Caco-2 (cell line): ENCODE measurements at regions of chr18 and their contacts with region 1.

Region 1: GRCh38 chr18:864872-865273 is 39.8 kb upstream of the ADCYAP1 start:
- DNase-seq: peak; percentile 73 to 74
- H3K4me3 ChIP-seq: no peak overlapping the region
- H3K4me3 Mint-ChIP-seq: no peak overlapping the region
- H3K27ac Mint-ChIP-seq: no peak overlapping the region
- H3K4me1 ChIP-seq: no peaks in the 10 kb centered on the region
- H3K4me1 Mint-ChIP-seq: no peaks in the 10 kb centered on the region
- H3K27me3 ChIP-seq: no peaks in the 10 kb centered on the region
- H3K27me3 Mint-ChIP-seq: peaks cover 12% of the 10 kb centered on the region
- CTCF ChIP-seq: peak; percentile 93 to 99

Region 2: DNA sequence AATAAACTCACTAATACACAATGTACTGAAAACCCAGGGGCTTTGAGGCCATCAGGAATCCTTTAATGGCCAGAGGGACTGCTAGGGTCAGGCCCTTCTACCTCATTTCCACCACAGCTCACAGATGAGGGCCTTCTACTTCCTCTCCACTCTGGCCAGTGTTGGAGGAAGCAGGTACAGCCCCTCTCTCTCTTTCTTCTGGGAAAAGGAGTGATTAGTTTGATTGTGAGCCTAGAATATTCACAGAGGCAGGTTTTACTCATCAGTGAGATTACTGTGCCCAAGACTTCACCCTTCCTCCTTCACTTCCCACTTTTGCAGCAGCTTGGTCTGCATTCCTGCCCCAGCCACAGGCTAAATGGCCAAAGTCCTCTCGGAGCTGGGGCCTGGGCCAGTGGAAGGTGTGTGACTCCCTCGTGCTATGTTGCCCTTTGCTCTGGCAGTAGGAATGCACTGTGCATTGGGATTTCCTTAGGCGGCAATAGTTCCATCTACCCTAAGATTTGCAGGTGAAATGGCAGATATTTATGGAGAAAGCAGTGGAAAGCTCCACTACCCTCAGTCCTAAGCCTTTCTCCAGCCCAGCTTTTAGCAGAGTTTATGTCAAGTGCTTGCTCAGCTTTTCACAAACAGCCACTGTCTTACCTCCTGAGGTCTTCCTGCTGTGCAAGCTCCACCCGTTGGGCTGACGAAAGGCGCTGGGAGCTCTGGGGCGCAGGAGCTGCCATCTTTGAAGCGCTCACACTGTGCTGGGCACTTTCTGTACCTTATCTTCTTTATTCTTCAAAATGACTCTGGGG is 16.6 kb before region 1 on chr18:
- CTCF ChIA-PET with region 1: no interaction called
- POLR2A ChIA-PET with region 1: no interaction called
- intact Hi-C with region 1: no loop called
- DNase-seq: peak; percentile 83 to 94
- H3K4me3 ChIP-seq: no peak overlapping the region
- H3K4me3 Mint-ChIP-seq: peak overlapping the region; percentile 31
- H3K27ac Mint-ChIP-seq: peak overlapping the region; percentile 82
- H3K4me1 ChIP-seq: peaks cover 21% of the 10 kb centered on the region
- H3K4me1 Mint-ChIP-seq: peaks cover 14% of the 10 kb centered on the region
- H3K27me3 ChIP-seq: no peaks in the 10 kb centered on the region
- H3K27me3 Mint-ChIP-seq: no peaks in the 10 kb centered on the region
- CTCF ChIP-seq: no peak

Region 3: DNA sequence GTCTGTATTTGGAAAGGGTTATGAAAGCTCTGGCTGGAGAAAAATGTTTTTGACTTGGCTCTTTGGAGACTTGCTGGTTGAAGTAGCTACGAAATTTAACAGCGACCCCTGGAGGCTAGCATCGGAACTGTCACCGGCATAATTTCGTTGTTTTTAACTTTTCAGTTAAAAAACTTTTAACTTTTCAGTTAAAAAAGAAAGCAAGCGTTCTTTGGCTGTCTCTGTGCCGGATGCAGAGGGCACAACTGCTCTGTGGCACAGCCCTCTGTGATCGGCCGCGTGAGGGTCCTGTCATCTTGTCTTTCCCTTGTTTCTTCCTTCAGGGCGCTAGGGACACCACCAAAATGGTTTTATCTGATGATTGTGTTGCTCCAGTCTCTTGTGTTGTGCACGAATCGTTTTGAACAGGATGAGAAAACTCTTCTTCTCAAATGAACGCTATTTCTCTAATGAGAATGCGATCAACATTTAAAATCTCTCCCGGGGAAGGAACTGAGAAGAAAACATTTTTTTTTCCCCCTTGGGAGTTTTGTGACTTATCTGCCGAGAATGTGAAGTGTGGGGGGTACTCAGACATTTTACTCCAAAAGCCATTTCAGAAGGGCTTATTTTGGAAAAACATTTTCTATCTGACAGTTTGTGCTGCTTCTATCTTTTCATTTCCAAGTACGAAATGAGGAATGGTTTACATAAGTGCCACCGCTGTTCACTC is 96.9 kb after region 1 on chr18:
- CTCF ChIA-PET with region 1: interaction called, 4 read pairs
- POLR2A ChIA-PET with region 1: no interaction called
- intact Hi-C with region 1: loop called (anchors 1 kb)
- DNase-seq: peak in 1 of 2 experiments; percentile 46
- H3K4me3 ChIP-seq: no peak overlapping the region
- H3K4me3 Mint-ChIP-seq: no peak overlapping the region
- H3K27ac Mint-ChIP-seq: no peak overlapping the region
- H3K4me1 ChIP-seq: no peaks in the 10 kb centered on the region
- H3K4me1 Mint-ChIP-seq: no peaks in the 10 kb centered on the region
- H3K27me3 ChIP-seq: no peaks in the 10 kb centered on the region; the same call in 1 of the 2 replicates
- H3K27me3 Mint-ChIP-seq: peaks cover 8% of the 10 kb centered on the region
- CTCF ChIP-seq: peak; percentile 88 to 89

Region 4: GRCh38 chr18:1062588-1062987 is 197.7 kb after region 1 on chr18:
- CTCF ChIA-PET with region 1: no interaction called
- POLR2A ChIA-PET with region 1: no interaction called
- intact Hi-C with region 1: loop called (anchors 5 kb)
- DNase-seq: no peak
- H3K4me3 ChIP-seq: no peak overlapping the region
- H3K4me3 Mint-ChIP-seq: no peak overlapping the region
- H3K27ac Mint-ChIP-seq: no peak overlapping the region
- H3K4me1 ChIP-seq: no peaks in the 10 kb centered on the region
- H3K4me1 Mint-ChIP-seq: no peaks in the 10 kb centered on the region
- H3K27me3 ChIP-seq: no peaks in the 10 kb centered on the region
- H3K27me3 Mint-ChIP-seq: no peaks in the 10 kb centered on the region
- CTCF ChIP-seq: peak in 1 of 2 experiments; percentile 20

Region 5: GRCh38 chr18:1663879-1664705 is 799.2 kb after region 1 on chr18:
- CTCF ChIA-PET with region 1: no interaction called
- POLR2A ChIA-PET with region 1: no interaction called
- intact Hi-C with region 1: loop called (anchors 1 kb)
- DNase-seq: peak; percentile 58 to 78
- H3K4me3 ChIP-seq: no peak overlapping the region
- H3K4me3 Mint-ChIP-seq: no peak overlapping the region
- H3K27ac Mint-ChIP-seq: no peak overlapping the region
- H3K4me1 ChIP-seq: no peaks in the 10 kb centered on the region
- H3K4me1 Mint-ChIP-seq: no peaks in the 10 kb centered on the region
- H3K27me3 ChIP-seq: no peaks in the 10 kb centered on the region
- H3K27me3 Mint-ChIP-seq: no peaks in the 10 kb centered on the region
- CTCF ChIP-seq: peak; percentile 90 to 94